ENCODE measurements at regions of chr4 and their contacts with region 1.

Region 1: DNA sequence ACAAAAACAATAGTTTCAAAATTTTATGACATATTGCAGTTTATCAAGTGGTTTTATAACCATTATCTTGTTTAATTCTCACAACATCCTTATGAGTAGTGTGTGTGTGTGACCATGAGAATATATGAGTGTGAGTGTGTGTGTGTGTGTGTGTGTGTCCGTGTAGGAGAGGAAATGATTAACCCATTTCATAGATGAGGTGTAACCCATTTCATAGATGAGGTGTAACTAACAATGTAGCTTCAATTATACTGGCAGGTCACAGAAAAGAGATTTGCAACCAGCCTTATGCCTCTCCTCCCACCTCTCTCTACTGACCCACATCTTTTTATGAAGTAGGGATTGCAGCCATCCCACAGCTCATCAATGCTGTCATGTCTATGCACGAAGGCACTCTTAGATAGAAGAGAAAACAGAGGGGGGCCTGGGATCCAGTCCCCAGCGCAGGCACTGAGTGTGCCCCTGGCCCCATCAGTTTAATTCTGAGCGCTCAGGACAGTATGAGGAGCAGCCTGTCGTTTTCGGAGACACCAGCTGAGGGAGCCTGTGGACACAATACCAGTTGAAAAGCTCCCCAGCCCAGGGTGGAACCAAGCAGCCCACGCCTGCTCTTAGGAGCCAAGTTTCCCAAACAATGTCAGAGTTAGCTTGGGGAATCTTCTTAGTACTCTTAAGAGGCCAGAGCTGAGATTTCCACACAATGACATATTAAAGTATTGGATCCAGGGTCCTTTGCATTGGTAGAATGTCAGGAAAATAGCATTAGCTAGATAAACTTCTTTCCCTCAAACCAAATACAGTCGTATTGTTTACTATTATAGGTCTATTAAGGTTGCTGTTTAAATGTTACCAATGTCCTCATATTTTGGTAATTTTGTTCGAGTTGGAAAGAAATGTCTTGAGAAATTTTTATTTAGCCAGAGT is 88.6 kb downstream of the PALLD start:
- DNase-seq: peak; percentile 87

Region 2: DNA sequence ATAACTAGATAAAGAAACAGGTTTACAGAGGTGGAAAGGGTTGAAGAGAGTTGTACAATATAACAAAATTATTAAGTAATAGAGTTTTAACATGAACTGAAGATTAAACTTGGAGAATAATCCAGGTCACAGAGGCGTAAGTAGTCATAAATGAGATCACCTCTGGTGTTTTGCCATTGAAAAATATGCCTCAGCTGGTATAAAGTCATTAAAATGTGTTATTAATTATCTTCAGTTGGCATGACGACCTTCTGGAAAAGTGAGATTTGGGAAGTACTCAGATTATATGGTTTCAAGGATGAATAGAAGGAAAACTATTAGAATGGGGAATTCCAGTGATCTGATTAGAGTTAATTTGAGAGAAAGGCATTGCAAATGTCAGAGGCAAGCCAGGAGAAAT is 730.5 kb before region 1 on chr4:
- intact Hi-C with region 1: no loop called
- DNase-seq: no peak

Region 3: GRCh38 chr4:168257768-168258167 is 327.7 kb before region 1 on chr4:
- intact Hi-C with region 1: no loop called
- DNase-seq: no peak

Region 4: GRCh38 chr4:168631241-168632162 is 46.1 kb after region 1 on chr4:
- intact Hi-C with region 1: loop called (anchors 2 kb)
- DNase-seq: no peak

Region 5: DNA sequence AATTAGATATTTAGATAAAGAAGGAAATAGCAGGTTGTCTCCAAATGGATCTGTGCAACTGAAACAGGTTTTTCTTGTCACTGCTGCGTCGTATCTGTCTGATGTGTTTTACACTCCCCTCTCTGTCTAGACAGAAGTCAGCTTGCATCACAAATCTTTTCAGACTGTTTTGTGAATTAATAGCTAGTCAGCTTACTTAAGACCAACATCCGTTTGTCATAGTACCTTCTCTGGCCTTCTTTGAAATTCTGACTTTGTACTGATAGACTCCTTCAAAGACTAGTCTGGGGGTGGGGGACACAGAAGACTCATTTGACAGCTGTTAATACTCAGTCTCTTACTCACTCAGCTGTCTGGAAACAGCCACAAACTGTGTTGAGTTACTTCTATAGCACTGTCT is 109.2 kb after region 1 on chr4:
- intact Hi-C with region 1: loop called (anchors 1 kb)
- DNase-seq: no peak

Region 6: DNA sequence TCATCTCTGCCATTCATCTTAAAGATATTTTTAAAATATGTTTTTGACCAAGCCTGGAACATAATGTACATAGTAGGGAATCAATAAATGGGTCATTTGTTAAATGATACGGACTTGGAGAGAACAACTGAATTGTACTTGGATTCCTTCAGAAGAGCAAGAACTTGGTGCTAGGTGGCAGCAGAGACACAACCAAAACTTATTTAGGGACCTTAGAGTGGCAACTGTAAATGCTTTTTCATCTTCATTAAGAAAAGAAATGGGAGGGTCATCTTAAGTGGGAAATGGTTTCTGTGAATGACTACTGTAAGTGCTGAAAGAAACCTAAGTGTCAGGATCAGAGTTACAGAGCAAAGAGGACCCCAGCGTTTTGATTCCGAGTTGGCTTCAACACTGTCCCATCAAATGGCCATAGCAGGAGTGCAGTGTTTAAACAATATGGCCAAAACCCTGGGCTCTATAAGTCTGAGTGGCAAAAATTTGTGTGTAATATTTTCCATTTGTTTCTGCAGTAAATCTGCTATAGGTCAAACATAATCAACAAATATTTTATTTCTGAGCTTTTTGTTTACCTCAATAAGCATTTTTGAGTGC is 125.0 kb after region 1 on chr4:
- intact Hi-C with region 1: loop called (anchors 2 kb)
- DNase-seq: no peak

Region 7: DNA sequence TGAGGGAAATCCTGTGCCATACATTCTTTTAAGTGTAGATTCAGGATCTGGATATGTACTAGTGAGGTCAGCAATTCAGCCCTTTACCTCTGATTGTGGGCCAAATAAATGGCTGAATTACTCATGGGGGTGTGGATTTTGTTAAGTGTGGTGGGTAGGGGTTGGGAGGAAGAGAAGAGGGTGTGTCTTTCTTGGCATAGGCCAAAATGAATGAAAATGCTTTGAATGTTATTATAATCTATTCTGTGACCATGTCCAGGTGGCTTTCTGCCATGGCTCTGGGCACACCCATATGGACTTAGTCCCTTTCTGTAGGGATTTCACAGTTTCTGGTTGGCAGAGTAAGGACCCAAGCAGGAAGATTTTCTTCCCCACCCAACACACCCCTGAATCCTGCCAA is 180.3 kb after region 1 on chr4:
- intact Hi-C with region 1: loop called (anchors 5 kb)
- DNase-seq: no peak

Region 8: DNA sequence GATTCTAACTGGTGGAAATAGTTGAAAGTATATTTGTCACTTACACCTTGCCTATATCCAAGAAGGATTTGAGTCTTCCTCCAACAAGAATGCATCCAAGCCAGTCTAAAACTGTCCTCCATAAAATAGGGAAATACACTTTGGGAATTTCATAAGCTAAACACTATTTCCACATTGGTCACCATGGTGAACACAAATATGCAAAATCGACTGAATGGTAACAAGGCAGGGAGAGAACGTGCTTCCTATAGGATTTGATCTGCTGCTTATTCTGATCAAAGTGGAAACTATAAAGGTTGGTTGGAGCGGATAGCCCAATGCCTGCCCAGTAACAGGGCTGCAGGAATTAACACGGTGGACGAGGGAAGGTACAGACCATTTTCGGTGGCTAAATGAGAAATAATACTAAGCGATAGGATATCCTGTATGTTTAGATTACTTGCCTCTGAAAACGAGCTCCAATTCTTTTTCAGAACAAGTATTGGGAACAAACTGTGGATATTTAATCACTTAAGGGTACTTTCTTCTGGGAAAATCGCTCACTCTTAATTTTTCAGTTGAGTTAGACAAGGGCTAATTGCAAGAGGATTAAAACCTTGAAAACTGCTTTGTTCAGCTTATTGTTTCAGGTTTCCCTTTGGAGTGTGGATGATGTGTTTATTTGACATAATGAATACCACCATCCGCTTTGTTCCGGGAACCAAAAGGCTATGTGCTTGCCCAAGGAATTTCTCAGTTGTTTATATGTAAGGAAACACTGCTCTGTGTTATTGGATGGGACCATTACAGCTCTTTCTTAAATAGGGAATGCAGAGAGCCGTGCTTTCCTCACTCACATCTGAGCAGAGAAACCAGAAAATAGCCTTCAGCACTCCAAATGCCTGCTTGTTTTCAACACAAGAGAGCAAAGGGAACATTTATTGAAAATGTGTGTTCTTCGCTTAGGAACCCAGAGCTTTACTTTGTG is 230.2 kb after region 1 on chr4:
- intact Hi-C with region 1: loop called (anchors 10 kb)
- DNase-seq: no peak

Region 9: DNA sequence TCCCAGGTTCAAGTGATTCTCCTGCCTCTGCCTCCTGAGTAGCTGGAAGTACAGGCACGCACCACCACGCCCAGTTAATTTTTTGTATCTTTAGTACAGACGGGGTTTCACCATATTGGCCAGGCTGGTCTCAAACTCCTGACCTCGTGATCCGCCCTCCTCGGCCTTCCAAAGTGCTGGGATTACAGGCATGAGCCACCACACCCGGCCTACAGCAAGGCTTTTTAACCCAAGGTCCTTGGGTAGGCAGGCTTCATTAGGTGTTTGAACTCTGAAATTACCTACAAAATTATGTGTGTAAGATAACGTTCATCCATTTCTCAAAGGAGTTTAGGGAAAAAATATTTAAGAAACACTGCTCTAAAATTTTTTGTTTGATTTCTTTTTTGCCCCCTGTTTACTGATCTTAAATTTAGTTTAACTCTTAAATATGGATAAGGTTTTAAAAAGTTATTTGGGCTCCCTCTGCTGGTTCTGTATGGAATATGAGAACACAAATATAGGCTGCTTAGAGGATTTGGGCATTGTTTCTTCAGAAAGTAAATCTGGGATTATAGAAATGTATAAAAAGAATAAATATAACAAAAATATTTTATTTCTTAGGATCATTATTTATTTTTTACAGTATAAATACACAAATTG is 331.8 kb after region 1 on chr4:
- intact Hi-C with region 1: loop called (anchors 2 kb)
- DNase-seq: no peak

Measured in cardiac septum (tissue), 1 donor.